Activated CD4-positive, alpha-beta memory T cell treated with anti-CD3 and anti-CD28 coated beads, Interleukin-2, amount 10 ng/mL, durations not matched to agents 7 days and 5 days (primary cell): ENCODE measurements at regions of chr16 and their contacts with region 1.

Region 1: DNA sequence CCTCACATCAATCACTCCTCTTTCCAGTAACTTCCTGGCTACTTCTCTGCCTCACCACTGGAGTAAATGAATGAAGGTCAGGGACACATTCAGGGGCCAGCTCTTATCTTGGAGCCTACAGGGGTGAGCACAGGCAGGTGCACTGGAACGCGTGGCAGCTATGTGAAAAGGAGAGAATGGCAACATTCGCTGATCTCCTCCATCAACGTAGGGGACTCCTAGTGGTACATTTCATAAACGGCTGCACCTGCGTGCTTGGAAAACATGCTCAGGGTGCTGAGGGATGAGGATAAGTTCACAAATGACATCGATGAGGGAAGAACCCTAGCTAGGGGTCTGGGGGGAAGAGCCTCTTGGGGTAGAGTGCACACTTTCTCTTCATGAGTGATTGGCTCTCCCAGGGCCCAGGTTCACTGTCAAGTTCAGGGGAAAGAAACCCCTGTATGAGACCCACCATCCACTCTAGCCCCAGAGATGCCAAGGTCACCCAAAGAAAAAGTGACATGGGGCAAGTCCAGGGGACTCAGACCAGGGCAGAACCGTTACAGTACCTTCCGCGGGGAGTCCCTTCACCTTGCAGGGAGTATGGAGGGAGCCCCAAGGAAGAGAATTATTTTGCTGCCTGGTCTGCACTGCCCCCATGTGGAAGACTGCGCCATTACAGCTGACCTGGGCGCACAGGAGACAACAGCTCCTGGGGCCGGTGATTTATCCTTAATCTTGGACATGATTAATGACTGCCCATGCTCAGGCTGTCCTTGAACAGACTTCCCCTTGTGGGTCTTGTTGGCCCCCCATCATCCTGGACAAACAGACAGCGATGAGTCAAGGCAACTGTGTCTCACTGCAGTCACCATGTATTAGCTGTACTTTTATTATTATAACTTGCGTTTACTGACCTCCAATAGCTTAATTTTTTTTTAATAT is 30.1 kb downstream of the VAC14 start:
- DNase-seq: peak; percentile 76
- H3K4me3 Mint-ChIP-seq: no peak overlapping the region
- H3K27ac Mint-ChIP-seq: peak overlapping the region; percentile 12
- H3K4me1 Mint-ChIP-seq: peaks cover 3% of the 10 kb centered on the region
- H3K27me3 Mint-ChIP-seq: no peaks in the 10 kb centered on the region

Region 2: GRCh38 chr16:70653809-70654771 is 116.8 kb before region 1 on chr16:
- CTCF ChIA-PET with region 1: interaction called, 25 read pairs
- POLR2A ChIA-PET with region 1: interaction called, 4 read pairs
- DNase-seq: peak; percentile 86
- H3K4me3 Mint-ChIP-seq: peak overlapping the region; percentile 31
- H3K27ac Mint-ChIP-seq: no peak overlapping the region
- H3K4me1 Mint-ChIP-seq: peaks cover 5% of the 10 kb centered on the region
- H3K27me3 Mint-ChIP-seq: peaks cover 3% of the 10 kb centered on the region

Region 3: GRCh38 chr16:70688246-70689000 is 82.5 kb before region 1 on chr16:
- CTCF ChIA-PET with region 1: interaction called, 10 read pairs
- POLR2A ChIA-PET with region 1: no interaction called
- DNase-seq: no peak
- H3K4me3 Mint-ChIP-seq: no peak overlapping the region
- H3K27ac Mint-ChIP-seq: no peak overlapping the region
- H3K4me1 Mint-ChIP-seq: peaks cover 1% of the 10 kb centered on the region
- H3K27me3 Mint-ChIP-seq: peaks cover 14% of the 10 kb centered on the region

Region 4: GRCh38 chr16:70746708-70747424 is 24.0 kb before region 1 on chr16:
- CTCF ChIA-PET with region 1: interaction called, 27 read pairs
- POLR2A ChIA-PET with region 1: interaction called, 3 read pairs
- DNase-seq: peak; percentile 79
- H3K4me3 Mint-ChIP-seq: no peak overlapping the region
- H3K27ac Mint-ChIP-seq: peak overlapping the region; percentile 83
- H3K4me1 Mint-ChIP-seq: peaks cover 51% of the 10 kb centered on the region
- H3K27me3 Mint-ChIP-seq: no peaks in the 10 kb centered on the region

Region 5: DNA sequence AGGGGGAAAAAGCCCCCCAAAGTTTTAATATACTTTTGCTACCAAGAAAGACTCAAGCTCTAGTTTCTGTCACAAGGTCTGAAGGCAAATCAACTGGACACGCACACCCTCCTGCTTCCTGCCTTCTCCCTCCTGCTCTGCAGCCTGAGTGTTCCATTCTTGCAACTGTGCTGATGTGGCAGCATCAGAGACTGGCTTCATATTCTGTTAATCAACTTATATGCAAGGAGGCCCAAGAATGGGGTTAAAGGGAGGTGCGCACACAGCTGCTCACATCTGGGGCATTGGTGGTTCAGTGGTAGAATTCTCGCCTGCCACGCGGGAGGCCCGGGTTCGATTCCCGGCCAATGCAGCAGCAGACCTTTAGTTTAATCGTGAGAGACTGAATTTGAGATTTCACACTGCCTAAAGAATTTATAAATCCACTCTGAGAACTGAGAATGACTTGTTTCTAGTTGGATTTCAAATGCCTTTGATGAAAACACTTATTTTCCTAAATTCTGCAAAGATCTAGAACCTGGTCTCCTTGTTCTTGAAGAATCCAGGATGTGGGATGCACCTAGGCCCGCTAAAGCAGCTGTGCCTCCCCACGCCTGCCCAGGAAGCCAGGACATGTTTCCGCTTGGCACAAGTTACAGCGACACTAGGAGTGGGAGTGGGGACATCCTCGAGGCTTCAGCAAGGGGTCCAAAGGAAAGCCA is 18.5 kb after region 1 on chr16:
- CTCF ChIA-PET with region 1: interaction called, 10 read pairs
- POLR2A ChIA-PET with region 1: no interaction called
- DNase-seq: no peak
- H3K4me3 Mint-ChIP-seq: no peak overlapping the region
- H3K27ac Mint-ChIP-seq: no peak overlapping the region
- H3K4me1 Mint-ChIP-seq: no peaks in the 10 kb centered on the region
- H3K27me3 Mint-ChIP-seq: no peaks in the 10 kb centered on the region